BJ (cell line): ENCODE measurements at regions of chr5 and their contacts with region 1.

Region 1: DNA sequence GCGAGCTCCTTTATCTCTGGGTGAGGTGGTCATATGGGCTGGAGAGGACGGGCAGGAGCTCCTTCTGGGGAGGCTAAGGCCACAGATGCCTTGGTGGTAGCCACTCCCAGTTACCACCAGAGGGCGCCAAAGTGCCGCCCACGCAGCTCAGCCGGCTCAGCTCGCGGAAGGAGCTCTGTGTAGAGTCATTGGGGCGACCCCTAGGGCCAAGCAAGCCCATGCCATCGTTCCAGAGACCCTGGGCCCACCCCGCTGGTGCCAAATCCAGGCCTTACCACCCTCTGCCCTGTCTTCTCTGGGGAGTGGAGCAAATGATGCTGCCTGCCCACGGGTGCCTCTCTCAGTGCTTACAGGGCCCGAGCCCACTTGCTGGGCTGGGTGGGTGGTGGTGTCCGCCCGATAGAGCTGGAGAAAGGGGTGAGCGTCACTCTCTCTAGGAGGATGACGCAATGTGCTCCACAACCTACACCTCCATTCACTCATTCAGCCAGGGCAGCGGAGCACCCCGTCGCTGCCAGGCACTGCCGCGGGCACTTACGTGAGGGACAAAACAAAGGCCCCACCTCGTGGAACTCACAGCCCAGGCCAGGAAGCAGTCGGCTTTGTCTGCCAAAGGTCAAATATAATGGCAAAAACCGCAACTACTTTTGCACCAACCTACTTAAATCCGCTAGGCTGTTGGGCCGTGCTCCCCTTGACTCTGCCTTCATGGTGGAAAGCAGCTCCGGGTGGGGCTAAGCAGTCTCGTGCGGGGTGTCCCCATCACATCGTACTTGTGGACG is 13.8 kb downstream of the TSPAN17 start:
- DNase-seq: no peak
- H3K4me3 ChIP-seq: no peak overlapping the region
- H3K27me3 ChIP-seq: peaks cover 20% of the 10 kb centered on the region
- CTCF ChIP-seq: peak; percentile 99

Region 2: DNA sequence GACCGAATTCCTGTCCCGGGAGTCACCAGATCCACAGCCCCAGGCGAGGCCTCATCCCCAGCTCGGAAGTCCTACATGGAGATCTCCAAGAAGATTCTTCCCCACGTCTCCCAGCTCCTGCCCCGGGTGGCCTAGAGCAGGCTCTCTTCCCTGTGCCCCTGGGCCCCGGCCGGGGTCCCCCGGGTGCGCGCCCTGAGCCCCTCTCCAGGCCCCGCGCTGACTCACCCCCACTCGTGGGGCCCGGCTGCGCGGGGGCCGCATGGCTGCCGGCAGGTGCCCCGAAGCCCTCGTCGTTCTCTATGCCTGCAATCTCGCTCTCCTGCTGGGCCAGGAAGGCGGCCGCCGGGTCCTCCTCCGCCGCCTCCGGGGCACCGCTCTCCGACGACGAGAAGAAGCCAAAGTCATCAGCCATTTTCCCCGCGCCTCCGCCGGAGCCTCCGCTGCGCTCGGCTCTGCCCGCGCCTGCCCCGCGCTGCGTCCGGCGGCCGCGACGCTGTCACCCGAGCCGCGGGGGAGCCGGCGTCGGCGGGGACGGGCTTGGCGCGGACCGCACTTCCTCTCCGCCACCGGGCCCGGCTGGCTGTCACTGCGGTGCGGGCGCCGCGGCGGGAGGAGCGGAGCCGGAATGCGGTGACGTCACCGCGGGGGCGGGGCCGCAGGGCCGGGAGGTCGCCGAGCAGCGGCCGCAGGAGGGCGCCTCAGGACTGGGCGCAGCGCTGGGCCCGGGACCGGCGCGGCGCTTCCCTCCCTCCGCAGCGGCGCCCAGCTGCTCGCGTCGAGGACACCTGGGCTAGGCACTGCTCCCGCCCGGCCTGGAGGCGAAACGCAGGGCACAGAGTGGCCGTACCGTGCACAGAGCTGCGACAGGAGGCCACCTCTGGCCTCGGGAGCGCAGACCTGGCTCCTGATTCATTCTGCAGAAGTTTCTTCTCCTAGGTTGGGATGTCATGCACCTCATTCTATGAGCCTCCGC is 244.8 kb before region 1 on chr5 and contains the start of gene CLTB:
- CTCF ChIA-PET with region 1: interaction called, 11 read pairs
- POLR2A ChIA-PET with region 1: no interaction called
- DNase-seq: no peak
- H3K4me3 ChIP-seq: peak within 1 kb of the TSS; percentile 84
- H3K27me3 ChIP-seq: no peaks in the 10 kb centered on the region
- CTCF ChIP-seq: 0 out of 2 replicates have a peak, but pooled peaks have one; percentile 16
- polyA plus RNA-seq, gene CLTB: 122 and 141 TPM in 2 replicates

Region 3: DNA sequence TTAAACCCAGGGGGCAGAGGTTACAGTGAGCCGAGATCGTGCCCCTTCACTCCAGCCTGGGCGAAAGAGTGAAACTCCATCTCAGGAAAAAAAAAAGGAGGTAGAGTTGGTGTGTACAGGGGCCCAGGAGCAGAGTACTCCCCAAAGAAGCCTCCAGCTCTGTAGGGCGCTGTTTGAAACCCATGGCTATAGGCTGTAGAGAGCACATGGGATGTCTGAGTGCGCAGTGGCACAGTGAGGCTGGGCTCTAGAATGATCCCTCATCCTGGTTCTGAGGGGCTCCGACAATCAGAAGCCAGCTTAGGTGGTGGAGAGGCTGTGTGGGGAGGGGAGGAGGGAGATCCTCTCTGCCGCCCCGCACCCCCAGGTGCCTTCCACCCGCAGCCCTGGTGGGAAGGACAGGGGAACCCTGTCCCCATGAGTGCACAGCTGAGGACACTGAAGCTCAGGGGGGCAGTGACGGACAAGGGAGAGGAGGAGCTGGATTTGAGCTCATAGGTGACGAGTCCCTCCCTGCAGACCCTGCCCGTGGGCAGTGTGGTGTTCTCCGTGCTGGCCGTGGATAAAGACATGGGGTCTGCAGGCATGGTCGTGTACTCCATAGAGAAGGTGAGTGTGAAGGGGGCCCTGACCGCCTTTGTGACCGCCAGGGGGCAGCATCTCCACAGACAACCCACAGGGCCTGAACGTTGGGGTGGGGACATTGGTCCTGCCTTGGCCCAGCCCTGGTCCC is 87.3 kb before region 1 on chr5:
- CTCF ChIA-PET with region 1: interaction called, 13 read pairs
- POLR2A ChIA-PET with region 1: no interaction called
- DNase-seq: no peak
- H3K4me3 ChIP-seq: no peak overlapping the region
- H3K27me3 ChIP-seq: no peaks in the 10 kb centered on the region
- CTCF ChIP-seq: peak; percentile 86

Region 4: GRCh38 chr5:176647030-176647866 is 13.8 kb before region 1 on chr5 and contains the start of gene TSPAN17:
- CTCF ChIA-PET with region 1: interaction called, 68 read pairs
- POLR2A ChIA-PET with region 1: interaction called, 3 read pairs
- DNase-seq: peak; percentile 93
- H3K4me3 ChIP-seq: peak within 1 kb of the TSS; percentile 68
- H3K27me3 ChIP-seq: no peaks in the 10 kb centered on the region
- CTCF ChIP-seq: peak; percentile 33
- polyA plus RNA-seq, gene TSPAN17: 50.4 and 65.8 TPM in 2 replicates

Region 5: GRCh38 chr5:176675675-176676360 is 14.8 kb after region 1 on chr5:
- CTCF ChIA-PET with region 1: interaction called, 29 read pairs
- POLR2A ChIA-PET with region 1: no interaction called
- DNase-seq: no peak
- H3K4me3 ChIP-seq: no peak overlapping the region
- H3K27me3 ChIP-seq: peaks cover 13% of the 10 kb centered on the region
- CTCF ChIP-seq: peak; percentile 60

Region 6: DNA sequence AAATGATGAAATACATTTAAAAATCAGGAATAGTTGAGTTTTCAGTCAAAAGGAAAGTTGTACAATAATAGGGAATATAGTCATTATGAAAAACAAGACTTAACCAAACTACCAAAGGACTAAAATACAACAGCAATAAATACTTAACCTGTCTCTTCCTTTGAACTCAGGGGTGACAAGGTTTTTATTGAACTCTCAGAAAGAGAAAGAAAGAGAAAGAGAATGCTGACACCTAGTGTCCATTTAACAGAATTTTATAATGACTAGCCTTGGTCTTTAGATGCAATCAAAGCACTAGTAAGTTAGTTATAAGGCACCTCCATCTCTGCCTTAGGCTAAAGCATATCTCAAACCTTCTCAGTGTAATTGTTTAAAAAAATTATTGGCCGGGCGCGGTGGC is 298.0 kb after region 1 on chr5:
- CTCF ChIA-PET with region 1: interaction called, 10 read pairs
- POLR2A ChIA-PET with region 1: no interaction called
- DNase-seq: no peak
- H3K4me3 ChIP-seq: no peak overlapping the region
- H3K27me3 ChIP-seq: no peaks in the 10 kb centered on the region
- CTCF ChIP-seq: peak; percentile 37; the same call in 1 of the 2 replicates

Region 7: DNA sequence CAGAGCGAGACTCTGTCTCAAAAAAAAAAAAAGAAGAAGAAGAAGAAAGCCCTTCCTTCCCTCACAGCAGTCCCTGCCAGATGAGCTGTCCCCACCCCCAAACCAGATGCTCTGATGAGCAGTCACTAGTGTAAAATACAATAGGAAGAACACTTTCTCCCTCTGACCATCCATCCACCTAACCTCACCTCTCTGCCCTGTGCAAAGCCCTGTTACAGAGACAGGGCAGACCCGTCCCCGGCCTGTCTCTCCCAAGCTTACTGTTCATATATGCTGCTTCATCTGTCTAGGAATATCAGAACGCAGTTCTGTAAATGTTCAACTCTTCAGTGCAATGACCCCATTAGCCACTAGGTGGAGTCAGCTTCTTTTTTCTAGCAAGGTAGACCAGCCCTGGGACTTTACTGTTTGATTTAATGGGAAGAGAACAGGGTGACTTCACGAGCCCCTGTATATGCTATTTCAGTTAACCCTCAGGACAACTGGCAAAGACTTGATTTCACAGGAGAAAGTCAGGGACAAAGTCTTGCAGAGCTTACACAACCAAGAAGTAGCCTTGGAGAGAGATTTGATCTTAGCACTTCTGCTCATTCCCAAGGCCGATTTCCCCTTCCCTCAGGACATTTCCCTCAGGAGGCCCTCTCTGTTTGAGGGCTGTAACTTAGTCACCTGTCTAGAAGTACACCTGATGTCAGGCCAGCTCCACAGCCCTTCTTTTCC is 410.8 kb after region 1 on chr5:
- CTCF ChIA-PET with region 1: interaction called, 12 read pairs
- POLR2A ChIA-PET with region 1: no interaction called
- DNase-seq: peak; percentile 49
- H3K4me3 ChIP-seq: peak overlapping the region; percentile 17; the same call in 1 of the 2 replicates
- H3K27me3 ChIP-seq: no peaks in the 10 kb centered on the region
- CTCF ChIP-seq: peak; percentile 91